Testis (tissue), 5 donors: ENCODE measurements at regions of chr2 and their contacts with region 1.

Region 1: GRCh38 chr2:230987137-230988020 is 8.5 kb upstream of the SPATA3 start:
- DNase-seq: peak; percentile 85
- H3K4me3 ChIP-seq: peak overlapping the region; percentile 21 to 55
- H3K27ac ChIP-seq: no peak overlapping the region
- H3K4me1 ChIP-seq: peaks cover 4% of the 10 kb centered on the region
- H3K27me3 ChIP-seq: no peaks in the 10 kb centered on the region
- CTCF ChIP-seq: peak; percentile 88 to 97 (median 94)
- POLR2A ChIP-seq: no peak

Region 2: GRCh38 chr2:230824406-230824978 is 162.9 kb before region 1 on chr2:
- intact Hi-C with region 1: loop called (anchors 10 kb)
- DNase-seq: peak; percentile 69
- H3K4me3 ChIP-seq: no peak overlapping the region
- H3K27ac ChIP-seq: no peak overlapping the region
- H3K4me1 ChIP-seq: no peaks in the 10 kb centered on the region
- H3K27me3 ChIP-seq: no peaks in the 10 kb centered on the region
- CTCF ChIP-seq: peak; percentile 58 to 68 (median 58)
- POLR2A ChIP-seq: no peak

Region 3: GRCh38 chr2:230902180-230902899 is 85.0 kb before region 1 on chr2:
- intact Hi-C with region 1: loop called (anchors 10 kb)
- DNase-seq: peak; percentile 67
- H3K4me3 ChIP-seq: no peak overlapping the region
- H3K27ac ChIP-seq: no peak overlapping the region
- H3K4me1 ChIP-seq: no peaks in the 10 kb centered on the region
- H3K27me3 ChIP-seq: no peaks in the 10 kb centered on the region
- CTCF ChIP-seq: peak; percentile 40 to 54 (median 48)
- POLR2A ChIP-seq: no peak